ENCODE measurements at regions of chr6 and their contacts with region 1.

Region 1: GRCh38 chr6:16964553-16965501 is 137.0 kb upstream of the STMND1 start:
- DNase-seq: peak; percentile 65
- CTCF ChIP-seq: peak; percentile 84

Region 2: DNA sequence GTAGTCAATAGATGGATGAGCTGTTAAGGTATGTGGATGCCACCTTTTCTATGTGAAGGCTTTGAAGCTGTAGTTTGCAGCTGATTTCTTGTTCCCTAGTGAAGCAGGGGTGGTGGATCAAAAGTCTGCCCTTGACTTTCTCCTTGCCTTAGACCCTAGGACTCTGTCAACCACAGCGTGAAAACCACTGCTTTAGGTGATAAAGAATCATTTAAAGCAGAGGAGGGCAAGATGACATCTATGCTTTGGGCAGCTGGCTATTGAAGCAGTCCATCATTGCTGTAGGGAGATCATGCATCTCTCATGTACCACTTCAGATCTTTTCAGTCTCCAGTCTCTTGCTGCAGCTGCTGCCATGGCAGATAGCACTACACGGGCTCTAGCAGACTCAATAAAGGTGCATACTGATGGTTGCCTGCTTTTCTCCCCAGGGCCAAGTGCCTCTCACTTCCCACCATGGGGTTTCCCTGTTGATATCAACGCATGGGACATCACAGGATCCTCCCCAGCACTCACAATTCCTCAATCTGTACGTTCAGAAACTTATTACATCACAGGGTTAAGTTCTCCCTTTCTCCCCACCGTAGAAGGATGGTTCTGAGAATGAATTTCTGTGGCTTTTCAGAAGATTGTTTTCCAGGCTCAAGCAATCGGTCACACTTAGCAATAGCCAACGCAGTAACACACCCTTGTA is 15.0 kb after region 1 on chr6:
- CTCF ChIA-PET with region 1: interaction called, 14 read pairs
- POLR2A ChIA-PET with region 1: no interaction called
- DNase-seq: no peak
- CTCF ChIP-seq: no peak

Measured in GM10248 (cell line).